ENCODE measurements at regions of chr3 and their contacts with region 1.

Region 1: DNA sequence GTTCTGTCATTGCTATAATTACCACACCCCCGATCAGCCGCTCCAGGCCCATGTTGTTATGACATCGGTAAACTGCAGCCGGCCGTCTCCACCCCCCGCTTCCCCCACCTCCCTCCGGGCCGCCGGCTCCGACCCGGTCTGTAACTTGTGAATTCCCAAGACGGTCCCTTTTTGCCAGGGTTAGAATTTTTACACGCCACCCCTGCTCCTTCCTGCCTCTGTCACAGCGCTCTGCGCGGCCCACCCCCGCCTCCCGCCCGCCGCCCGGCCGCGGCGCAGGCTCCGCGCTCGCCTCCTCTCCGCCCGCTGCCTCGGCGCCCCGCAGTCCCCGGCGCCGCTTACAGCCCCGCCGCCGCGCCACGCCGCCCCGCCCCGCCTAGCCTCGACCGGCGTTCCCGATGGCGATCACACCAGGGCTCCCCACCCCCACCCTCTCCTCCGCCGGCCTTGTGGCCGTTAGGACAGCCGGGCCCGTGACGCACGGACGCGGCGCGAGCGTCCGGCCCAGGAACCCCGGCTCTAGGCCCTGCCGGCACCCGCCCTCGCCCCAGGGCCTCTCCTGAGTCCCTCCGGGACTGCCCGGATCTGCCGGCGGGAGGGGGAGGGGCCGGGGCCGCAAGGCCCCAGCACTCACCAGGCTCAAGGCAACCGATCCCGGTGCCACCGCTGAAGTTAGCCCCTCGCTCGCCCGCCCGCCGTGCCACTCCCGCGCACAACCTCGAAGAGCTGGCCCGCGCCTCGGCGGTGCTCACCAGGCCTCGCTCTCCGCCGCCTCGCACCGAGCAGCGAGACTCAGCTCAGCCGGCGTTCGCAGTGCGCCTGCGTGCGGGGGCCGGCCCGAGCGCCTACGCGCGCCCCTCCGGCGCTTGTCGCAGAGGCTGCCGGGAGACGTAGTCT is at the start of gene KPNA1:
- DNase-seq: peak; percentile 90 to 93
- ATAC-seq: peak; percentile 76 to 84
- H3K4me3 ChIP-seq: peak within 1 kb of the TSS; percentile 65 to 94 (median 84)
- H3K27ac ChIP-seq: peak within 1 kb of the TSS; percentile 94 to 99 (median 97)
- H3K4me1 ChIP-seq: peaks cover 39 to 44% of the 10 kb centered on the region in 2 donors
- H3K27me3 ChIP-seq: no peaks in the 10 kb centered on the region
- CTCF ChIP-seq: no peak
- POLR2A ChIP-seq: peak; percentile 99 to 100
- total RNA-seq, gene KPNA1: 108 to 119 (median 112) TPM

Region 2: GRCh38 chr3:122305818-122306621 is 208.4 kb before region 1 on chr3:
- in situ Hi-C with region 1: no loop called
- intact Hi-C with region 1: no loop called
- DNase-seq: no peak
- ATAC-seq: no peak
- H3K4me3 ChIP-seq: no peak overlapping the region
- H3K27ac ChIP-seq: no peak overlapping the region
- H3K4me1 ChIP-seq: no peaks in the 10 kb centered on the region
- H3K27me3 ChIP-seq: no peaks in the 10 kb centered on the region
- CTCF ChIP-seq: no peak
- POLR2A ChIP-seq: no peak

Region 3: DNA sequence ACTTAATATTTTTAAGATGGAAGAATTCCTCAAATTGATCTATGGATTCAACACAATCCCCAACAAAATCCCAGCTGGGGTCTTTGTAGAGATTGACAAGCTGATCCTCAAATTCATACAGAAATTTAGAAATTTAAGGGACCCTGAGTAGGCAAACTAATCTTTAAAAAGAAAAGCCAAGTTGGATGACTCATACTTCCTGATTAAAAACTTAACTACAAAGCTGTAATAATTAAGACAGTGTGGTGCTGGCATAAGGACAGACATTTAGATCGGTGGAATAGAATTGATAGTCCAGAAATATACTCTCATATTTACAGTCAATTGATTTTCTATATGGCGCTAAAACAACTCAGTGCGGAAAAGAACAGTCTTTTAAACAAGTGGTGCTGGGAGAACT is 118.8 kb before region 1 on chr3:
- in situ Hi-C with region 1: no loop called
- intact Hi-C with region 1: no loop called
- DNase-seq: no peak
- ATAC-seq: no peak
- H3K4me3 ChIP-seq: no peak overlapping the region
- H3K27ac ChIP-seq: no peak overlapping the region
- H3K4me1 ChIP-seq: peaks cover 0 to 23% of the 10 kb centered on the region in 2 donors
- H3K27me3 ChIP-seq: no peaks in the 10 kb centered on the region
- CTCF ChIP-seq: no peak
- POLR2A ChIP-seq: no peak

Region 4: GRCh38 chr3:122754929-122755328 is 240.6 kb after region 1 on chr3:
- in situ Hi-C with region 1: no loop called
- intact Hi-C with region 1: no loop called
- DNase-seq: no peak
- ATAC-seq: peak; percentile 45 to 90
- H3K4me3 ChIP-seq: no peak overlapping the region
- H3K27ac ChIP-seq: no peak overlapping the region
- H3K4me1 ChIP-seq: peaks cover 1 to 10% of the 10 kb centered on the region in 2 donors
- H3K27me3 ChIP-seq: no peaks in the 10 kb centered on the region
- CTCF ChIP-seq: peak; percentile 40 to 72 (median 57)
- POLR2A ChIP-seq: no peak

Region 5: GRCh38 chr3:122793568-122794416 is 279.4 kb after region 1 on chr3 and contains the start of gene HSPBAP1:
- in situ Hi-C with region 1: no loop called
- intact Hi-C with region 1: loop called (anchors 5 kb)
- DNase-seq: peak; percentile 94 to 96
- ATAC-seq: peak; percentile 76 to 84
- H3K4me3 ChIP-seq: peak within 1 kb of the TSS; percentile 74 to 90 (median 78)
- H3K27ac ChIP-seq: peak within 1 kb of the TSS; percentile 95 to 99 (median 96)
- H3K4me1 ChIP-seq: peaks cover 55 to 56% of the 10 kb centered on the region in 2 donors
- H3K27me3 ChIP-seq: no peaks in the 10 kb centered on the region
- CTCF ChIP-seq: peak in 2 of 5 experiments; percentile 39 to 50
- POLR2A ChIP-seq: peak; percentile 96
- total RNA-seq, gene HSPBAP1: 14.5 to 30.7 (median 17.0) TPM

Measured in gastrocnemius medialis (tissue), 4 donors.